ENCODE measurements at regions of chr18 and their contacts with region 1.

Region 1: GRCh38 chr18:22860807-22861206 is 72.3 kb upstream of the RBBP8 start:
- DNase-seq: no peak

Region 2: DNA sequence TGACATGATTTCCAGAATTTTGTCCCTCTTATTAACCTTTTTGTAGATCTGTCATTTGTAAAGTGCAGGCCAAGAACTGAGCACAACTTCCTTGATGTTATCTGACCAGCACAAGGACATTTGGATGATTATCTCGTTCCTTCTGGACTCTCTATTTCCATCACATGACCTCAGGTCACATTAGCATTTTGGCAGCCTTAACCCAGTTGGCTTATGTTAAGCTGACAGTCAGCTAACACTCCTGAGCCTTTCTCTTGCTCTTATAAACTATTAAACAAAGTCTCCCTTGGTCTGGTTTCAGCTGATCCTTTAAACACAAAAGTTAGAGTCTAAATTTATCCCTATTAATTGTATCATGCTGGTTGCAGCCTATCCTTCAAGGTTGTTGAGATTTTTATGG is 94.9 kb before region 1 on chr18:
- intact Hi-C with region 1: no loop called
- DNase-seq: no peak

Region 3: DNA sequence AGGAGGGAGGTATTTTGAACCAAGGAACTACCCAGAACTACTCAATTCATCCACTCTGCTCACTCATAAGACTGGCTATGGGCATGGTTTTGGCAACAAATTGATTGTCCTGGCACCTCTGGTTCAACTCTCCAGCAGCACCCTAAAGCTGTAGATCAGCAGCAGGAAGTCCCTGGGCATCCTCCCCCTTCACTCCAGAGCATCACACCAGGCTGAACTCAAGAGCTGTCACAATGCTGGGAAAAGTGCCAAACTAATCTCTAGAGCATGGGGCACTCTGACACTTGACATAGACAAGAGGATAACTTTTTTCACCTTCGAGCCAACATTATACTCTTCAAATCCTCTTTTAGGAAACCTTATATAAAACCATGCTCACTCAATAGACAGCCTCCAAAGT is 81.8 kb before region 1 on chr18:
- intact Hi-C with region 1: no loop called
- DNase-seq: no peak

Region 4: GRCh38 chr18:22831441-22831904 is 29.3 kb before region 1 on chr18:
- intact Hi-C with region 1: loop called in 1 of 2 experiments (anchors 1 kb)
- DNase-seq: no peak

Region 5: DNA sequence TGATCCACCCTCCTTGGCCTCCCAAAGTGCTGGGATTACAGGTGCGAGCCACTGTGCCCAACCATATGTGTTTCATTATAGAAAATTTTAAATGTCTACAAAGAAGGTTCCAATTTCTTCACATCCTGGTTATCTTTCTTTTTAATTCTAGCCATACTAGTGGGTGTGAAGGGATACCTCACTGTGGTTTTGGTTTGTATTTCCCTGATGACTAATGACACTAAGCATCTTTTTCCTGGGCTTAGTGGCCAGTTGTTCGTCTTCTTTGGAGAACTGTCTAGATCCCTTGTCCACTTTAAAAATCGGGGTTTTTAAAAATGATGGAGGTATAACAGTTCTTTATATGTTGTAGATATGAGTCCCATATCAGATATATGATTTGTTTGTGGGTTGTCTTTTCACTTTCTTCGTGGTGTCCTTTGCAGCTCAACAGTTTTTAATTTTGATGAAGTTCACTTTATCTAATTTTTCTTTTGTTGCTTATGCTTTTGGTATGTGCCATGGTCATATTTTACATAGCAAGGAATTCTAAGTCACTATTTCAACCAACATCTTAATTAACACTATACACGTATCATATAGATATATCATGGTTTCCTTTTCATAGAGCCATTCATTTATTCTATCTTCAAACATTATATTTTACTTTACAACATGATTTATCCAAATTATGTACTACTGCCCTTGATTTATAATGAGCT is 457.3 kb after region 1 on chr18:
- intact Hi-C with region 1: no loop called
- DNase-seq: no peak

Measured in posterior vena cava (tissue), 2 donors.